Transverse colon (tissue), 4 donors: ENCODE measurements at regions of chr4 and their contacts with region 1.

Region 1: DNA sequence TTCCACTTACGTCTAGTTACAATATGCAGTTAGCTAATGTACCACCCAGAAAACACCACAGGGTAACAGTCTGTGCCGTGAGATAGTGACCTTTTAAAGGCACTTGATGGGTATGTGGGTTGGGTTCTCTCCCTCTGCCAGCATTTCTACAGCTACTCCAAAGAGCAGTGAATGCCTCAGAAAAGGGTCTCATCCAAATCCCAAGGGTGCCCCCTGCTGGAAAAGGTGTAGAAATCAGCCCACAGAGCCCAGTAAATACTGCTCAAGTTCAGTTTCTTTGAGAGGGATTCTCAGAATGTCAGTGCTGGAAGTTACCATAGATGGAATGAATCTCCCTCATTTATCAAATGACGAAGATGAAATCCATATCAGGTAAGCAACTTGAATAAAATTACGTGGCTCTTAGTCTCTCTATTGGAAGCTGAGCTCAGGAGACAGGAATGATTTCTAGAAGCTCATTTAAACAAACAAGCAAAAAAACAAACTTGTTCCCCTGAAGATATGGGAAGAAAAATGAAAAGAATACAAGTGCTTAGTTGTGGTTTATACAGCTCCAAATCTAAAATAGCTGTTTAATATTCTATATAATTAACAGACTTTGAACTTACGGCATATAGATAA is 9.5 kb downstream of the RNF175 start:
- DNase-seq: peak; percentile 43
- H3K4me3 ChIP-seq: no peak overlapping the region
- H3K27ac ChIP-seq: no peak overlapping the region
- H3K4me1 ChIP-seq: no peaks in the 10 kb centered on the region
- H3K27me3 ChIP-seq: peaks cover 3% of the 10 kb centered on the region
- CTCF ChIP-seq: peak; percentile 35 to 52 (median 49)
- EP300 ChIP-seq: no peak
- POLR2A ChIP-seq: no peak

Region 2: DNA sequence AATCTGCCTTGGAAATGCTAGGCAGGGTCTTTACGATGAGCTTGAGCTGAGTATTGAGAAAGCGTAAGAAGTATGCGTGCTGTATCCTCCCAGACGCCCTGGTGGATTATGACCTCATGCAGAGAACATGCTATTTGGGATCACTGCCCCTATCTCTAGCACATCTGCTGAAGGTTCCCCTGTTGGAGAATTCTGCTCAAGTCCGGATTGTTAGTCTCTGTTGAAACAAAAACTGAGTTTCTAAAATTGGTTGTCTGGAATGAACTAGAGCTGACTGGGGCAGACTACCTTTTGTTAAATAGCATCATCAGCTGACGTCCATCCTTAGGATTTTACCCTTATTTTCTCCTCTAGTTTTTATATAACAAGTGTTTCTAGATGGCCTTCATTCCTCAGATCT is 806.6 kb before region 1 on chr4:
- in situ Hi-C with region 1: no loop called
- intact Hi-C with region 1: no loop called
- DNase-seq: no peak
- H3K4me3 ChIP-seq: no peak overlapping the region
- H3K27ac ChIP-seq: peak overlapping the region; percentile 43 to 73 (median 62)
- H3K4me1 ChIP-seq: peaks cover 0 to 25% (median 19%) of the 10 kb centered on the region in 4 donors
- H3K27me3 ChIP-seq: peaks cover 12% of the 10 kb centered on the region
- CTCF ChIP-seq: no peak
- EP300 ChIP-seq: no peak
- POLR2A ChIP-seq: no peak

Region 3: GRCh38 chr4:153060196-153060595 is 690.1 kb before region 1 on chr4:
- in situ Hi-C with region 1: no loop called
- intact Hi-C with region 1: no loop called
- DNase-seq: no peak
- H3K4me3 ChIP-seq: no peak overlapping the region
- H3K27ac ChIP-seq: no peak overlapping the region
- H3K4me1 ChIP-seq: peaks cover 0 to 10% (median 7%) of the 10 kb centered on the region in 4 donors
- H3K27me3 ChIP-seq: peaks cover 3% of the 10 kb centered on the region
- CTCF ChIP-seq: no peak
- EP300 ChIP-seq: no peak
- POLR2A ChIP-seq: no peak

Region 4: DNA sequence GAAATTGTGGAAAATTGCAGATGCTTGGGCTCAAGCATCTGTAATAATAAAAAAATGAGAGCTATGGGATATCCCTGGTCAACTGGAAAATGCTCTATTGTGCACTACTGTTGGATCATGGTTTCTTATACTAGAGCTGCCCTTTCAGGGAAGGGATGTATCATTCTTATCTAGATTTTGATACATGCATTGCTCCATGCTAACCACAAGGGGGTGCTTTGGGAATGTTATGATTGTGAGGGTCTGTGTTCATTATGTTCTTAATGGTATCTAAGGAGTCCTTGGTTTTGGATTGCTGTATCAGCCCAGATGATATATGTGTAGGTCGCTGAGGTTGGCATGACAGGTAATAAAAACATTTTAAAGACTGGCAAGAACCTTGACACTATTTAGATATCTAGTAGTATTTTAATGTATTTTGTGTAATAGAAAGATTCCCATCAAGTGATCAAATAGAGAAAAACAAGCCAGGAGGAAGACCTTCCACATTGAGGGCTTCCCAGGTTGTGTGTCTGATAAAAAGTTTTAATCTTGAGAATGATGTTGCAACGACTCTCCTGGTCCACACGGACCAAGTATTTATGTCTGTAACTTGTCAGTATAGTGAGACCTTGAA is 115.5 kb before region 1 on chr4:
- in situ Hi-C with region 1: loop called in 1 of 4 experiments (anchors 10 kb)
- intact Hi-C with region 1: no loop called
- DNase-seq: no peak
- H3K4me3 ChIP-seq: no peak overlapping the region
- H3K27ac ChIP-seq: no peak overlapping the region
- H3K4me1 ChIP-seq: no peaks in the 10 kb centered on the region
- H3K27me3 ChIP-seq: no peaks in the 10 kb centered on the region
- CTCF ChIP-seq: peak; percentile 30 to 57 (median 46)
- EP300 ChIP-seq: no peak
- POLR2A ChIP-seq: no peak

Region 5: DNA sequence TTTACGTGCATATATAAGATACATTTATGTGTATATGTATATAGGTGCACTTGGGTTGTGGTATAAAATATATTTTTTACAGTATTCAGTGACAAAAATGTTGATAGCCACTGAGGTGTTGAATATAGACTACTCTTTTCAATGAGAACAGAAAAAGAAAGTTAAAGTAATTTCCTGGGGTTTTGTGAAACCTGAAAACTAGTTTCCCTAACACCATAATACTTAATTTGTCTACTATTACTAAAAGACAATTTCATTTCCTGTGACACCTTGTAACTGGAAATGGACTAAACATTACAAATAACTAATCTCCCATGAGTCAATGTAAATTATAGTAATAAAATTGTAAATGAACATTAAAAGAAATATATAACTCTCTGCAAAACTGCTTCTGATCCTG is 1658.5 kb after region 1 on chr4:
- in situ Hi-C with region 1: no loop called
- intact Hi-C with region 1: no loop called
- DNase-seq: no peak
- H3K4me3 ChIP-seq: no peak overlapping the region
- H3K27ac ChIP-seq: no peak overlapping the region
- H3K4me1 ChIP-seq: peaks cover 0 to 4% (median 0%) of the 10 kb centered on the region in 4 donors
- H3K27me3 ChIP-seq: no peaks in the 10 kb centered on the region
- CTCF ChIP-seq: no peak
- EP300 ChIP-seq: no peak
- POLR2A ChIP-seq: no peak